Transverse colon (tissue), 4 donors: ENCODE measurements at regions of chrX and their contacts with region 1.

Region 1: GRCh38 chrX:134969726-134970125 is 21.1 kb upstream of the SMIM10 start:
- DNase-seq: no peak
- H3K4me3 ChIP-seq: no peak overlapping the region
- H3K27ac ChIP-seq: no peak overlapping the region
- H3K4me1 ChIP-seq: no peaks in the 10 kb centered on the region
- H3K27me3 ChIP-seq: no peaks in the 10 kb centered on the region
- CTCF ChIP-seq: no peak
- EP300 ChIP-seq: no peak
- POLR2A ChIP-seq: no peak

Region 2: DNA sequence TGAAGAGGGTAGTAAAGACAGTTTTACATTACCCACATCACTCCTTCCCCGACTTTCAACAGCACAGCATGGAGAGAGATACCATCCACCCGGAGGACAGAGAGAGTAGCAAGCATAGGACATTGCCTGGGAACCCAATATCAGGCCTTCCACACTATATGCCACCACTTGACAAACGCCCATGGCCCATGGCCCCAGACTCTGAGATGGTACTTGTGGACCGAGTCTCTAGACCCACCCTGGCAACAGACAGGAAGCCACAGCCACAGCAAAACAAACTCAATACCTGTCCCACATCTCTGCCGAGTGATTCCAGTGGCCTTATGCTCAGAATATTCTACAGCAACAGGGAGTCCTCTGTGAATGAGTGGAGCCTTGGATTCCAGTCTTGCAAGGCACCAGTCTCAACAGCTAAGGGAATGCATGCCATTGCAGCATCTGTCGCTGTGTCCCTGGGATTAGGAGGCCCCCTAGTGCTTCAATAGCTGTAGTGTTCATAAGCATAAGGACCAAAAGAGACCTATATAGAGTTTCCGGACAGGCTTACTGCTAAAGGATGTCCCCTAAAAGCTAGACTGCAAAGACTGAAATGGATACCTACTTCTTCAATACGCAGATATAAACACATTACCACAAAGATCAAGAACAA is 216.2 kb after region 1 on chrX:
- in situ Hi-C with region 1: loop called in 1 of 4 experiments (anchors 25 kb)
- intact Hi-C with region 1: no loop called
- DNase-seq: no peak
- H3K4me3 ChIP-seq: no peak overlapping the region
- H3K27ac ChIP-seq: no peak overlapping the region
- H3K4me1 ChIP-seq: no peaks in the 10 kb centered on the region
- H3K27me3 ChIP-seq: no peaks in the 10 kb centered on the region
- CTCF ChIP-seq: peak; percentile 10 to 34 (median 32)
- EP300 ChIP-seq: no peak
- POLR2A ChIP-seq: no peak

Region 3: DNA sequence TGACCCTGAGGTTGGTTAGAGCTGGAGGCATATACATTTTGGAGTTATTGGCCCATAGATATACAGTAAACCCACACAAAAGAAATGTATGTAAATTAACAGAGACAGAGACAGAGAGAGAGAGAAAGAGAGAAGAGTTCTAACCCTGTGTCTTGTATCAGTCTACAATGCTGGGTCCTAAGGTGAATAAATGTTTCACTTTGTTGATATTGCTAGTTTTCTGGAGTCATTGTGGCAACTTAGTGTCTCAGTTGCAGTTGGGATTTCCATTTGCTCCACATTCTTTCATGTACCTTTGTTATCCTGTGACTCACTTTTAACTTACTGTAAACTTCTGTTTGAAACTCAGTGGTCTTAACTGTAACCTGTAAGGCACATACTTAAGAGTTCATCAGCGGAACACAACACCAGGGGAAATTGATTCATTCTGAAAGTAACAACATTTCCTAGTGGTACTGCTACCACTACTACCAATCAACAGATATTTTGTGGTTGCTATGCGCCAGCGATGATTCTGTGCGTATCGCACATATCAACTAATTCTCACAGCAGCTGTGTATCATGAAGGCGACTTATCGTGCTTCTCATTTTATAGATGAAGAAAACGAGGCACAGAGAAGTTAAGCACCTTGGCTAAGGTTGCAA is 243.6 kb after region 1 on chrX:
- in situ Hi-C with region 1: loop called in 1 of 4 experiments (anchors 25 kb)
- intact Hi-C with region 1: no loop called
- DNase-seq: no peak
- H3K4me3 ChIP-seq: no peak overlapping the region
- H3K27ac ChIP-seq: no peak overlapping the region
- H3K4me1 ChIP-seq: no peaks in the 10 kb centered on the region
- H3K27me3 ChIP-seq: no peaks in the 10 kb centered on the region
- CTCF ChIP-seq: no peak
- EP300 ChIP-seq: no peak
- POLR2A ChIP-seq: no peak